Left colon (tissue), 2 donors: ENCODE measurements at regions of chr16 and their contacts with region 1.

Region 1: GRCh38 chr16:30984669-30985400 is at the start of gene HSD3B7:
- DNase-seq: peak; percentile 88 to 94
- ATAC-seq: peak; percentile 89
- total RNA-seq, gene HSD3B7: 16.9 to 27.2 TPM

Region 2: GRCh38 chr16:31117391-31118197 is 132.8 kb after region 1 on chr16 and contains the start of gene KAT8:
- intact Hi-C with region 1: no loop called
- DNase-seq: peak; percentile 98 to 99
- ATAC-seq: peak; percentile 87
- total RNA-seq, gene KAT8: 61.6 to 76.0 TPM

Region 3: GRCh38 chr16:31142109-31143010 is 157.5 kb after region 1 on chr16:
- intact Hi-C with region 1: loop called in 1 of 2 experiments (anchors 10 kb)
- DNase-seq: peak; percentile 99
- ATAC-seq: peak; percentile 81

Region 4: DNA sequence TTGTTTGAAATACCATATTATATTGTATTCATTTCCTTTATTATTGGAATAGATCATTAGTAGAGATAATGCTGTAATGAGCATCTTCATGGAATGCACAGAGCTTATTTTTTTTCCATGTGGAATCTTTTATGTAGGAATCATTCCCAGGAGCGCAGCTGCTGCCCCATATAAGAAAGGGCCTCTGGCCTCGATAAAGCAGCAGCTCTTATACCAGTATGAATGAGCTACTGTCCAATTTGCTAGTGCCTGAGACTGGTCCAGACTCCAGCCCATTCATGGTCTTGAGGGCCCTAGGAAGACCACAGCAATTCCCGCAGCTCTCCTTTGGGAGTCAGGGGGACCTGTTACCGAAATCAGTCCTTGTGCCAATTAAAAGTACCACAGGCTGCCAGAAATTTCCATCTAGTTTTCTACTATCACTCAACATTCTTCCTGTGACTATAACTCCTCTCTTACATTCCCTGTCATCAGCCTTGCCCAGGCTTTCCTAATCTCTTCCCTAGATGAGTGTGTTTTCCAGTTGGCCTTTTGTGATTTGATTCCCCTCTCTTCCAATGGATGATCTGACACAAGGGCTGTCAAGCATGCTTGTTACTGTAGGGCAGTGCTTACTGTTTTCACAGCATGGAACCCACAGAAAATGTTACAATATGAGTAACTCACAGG is 455.8 kb after region 1 on chr16:
- intact Hi-C with region 1: loop called in 1 of 2 experiments (anchors 5 kb)
- DNase-seq: no peak
- ATAC-seq: no peak